Prostate gland (tissue), 2 donors: ENCODE measurements at regions of chr9 and their contacts with region 1.

Region 1: GRCh38 chr9:38392235-38393127 is at the start of gene ALDH1B1:
- DNase-seq: peak; percentile 79
- H3K4me3 ChIP-seq: peak within 1 kb of the TSS; percentile 65 to 67
- H3K27ac ChIP-seq: peak within 1 kb of the TSS; percentile 64 to 77
- H3K4me1 ChIP-seq: peaks cover 5% of the 10 kb centered on the region
- H3K27me3 ChIP-seq: no peaks in the 10 kb centered on the region
- CTCF ChIP-seq: no peak
- POLR2A ChIP-seq: peak; percentile 24
- total RNA-seq, gene ALDH1B1: 42.5 to 88.8 TPM

Region 2: GRCh38 chr9:38035873-38036272 is 356.6 kb before region 1 on chr9:
- intact Hi-C with region 1: no loop called
- DNase-seq: no peak
- H3K4me3 ChIP-seq: no peak overlapping the region
- H3K27ac ChIP-seq: no peak overlapping the region
- H3K4me1 ChIP-seq: peaks cover 27% of the 10 kb centered on the region
- H3K27me3 ChIP-seq: no peaks in the 10 kb centered on the region
- CTCF ChIP-seq: no peak
- POLR2A ChIP-seq: no peak

Region 3: DNA sequence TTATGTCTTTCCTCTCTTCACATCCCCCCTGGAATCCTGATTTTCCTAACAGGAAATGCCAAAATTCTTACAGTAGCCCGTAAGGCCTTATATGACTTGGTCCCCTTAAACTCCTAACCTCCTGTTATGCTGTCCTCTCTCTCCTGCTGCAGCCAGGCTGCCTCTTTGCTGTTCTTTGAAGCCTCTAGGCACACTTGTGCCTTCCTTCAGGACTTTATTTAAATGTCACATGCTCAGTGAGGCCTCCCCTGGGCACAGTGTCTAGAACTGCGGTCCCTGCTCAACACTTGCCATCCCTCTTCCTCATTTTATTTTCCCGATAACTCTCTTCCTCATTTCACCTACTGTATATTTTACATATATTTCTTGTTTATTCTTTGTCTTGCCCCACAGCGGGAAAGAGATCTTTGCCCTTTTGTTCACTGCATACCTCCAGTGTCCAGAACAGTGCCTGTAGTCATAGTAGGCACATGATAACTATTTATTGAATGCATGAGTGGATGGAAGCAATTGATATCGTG is 318.0 kb before region 1 on chr9:
- intact Hi-C with region 1: loop called (anchors 5 kb)
- DNase-seq: no peak
- H3K4me3 ChIP-seq: no peak overlapping the region
- H3K27ac ChIP-seq: no peak overlapping the region
- H3K4me1 ChIP-seq: no peaks in the 10 kb centered on the region
- H3K27me3 ChIP-seq: no peaks in the 10 kb centered on the region
- CTCF ChIP-seq: no peak
- POLR2A ChIP-seq: no peak